IMR-90 (cell line): ENCODE measurements at regions of chr7 and their contacts with region 1.

Region 1: GRCh38 chr7:39709768-39710311 is 86.5 kb downstream of the RALA start:
- DNase-seq: peak; percentile 91
- ATAC-seq: peak; percentile 93
- H3K4me3 ChIP-seq: no peak overlapping the region
- H3K27ac ChIP-seq: no peak overlapping the region
- H3K4me1 ChIP-seq: peaks cover 4% of the 10 kb centered on the region; the same call in 1 of the 2 replicates
- H3K27me3 ChIP-seq: no peaks in the 10 kb centered on the region
- CTCF ChIP-seq: no peak
- POLR2A ChIP-seq: no peak
- RAD21 ChIP-seq: no peak

Region 2: GRCh38 chr7:39720574-39720973 is 10.7 kb after region 1 on chr7:
- CTCF ChIA-PET with region 1: no interaction called
- POLR2A ChIA-PET with region 1: no interaction called
- dilution Hi-C with region 1: no loop called
- in situ Hi-C with region 1: no loop called
- intact Hi-C with region 1: loop called (anchors 2 kb)
- DNase-seq: no peak
- ATAC-seq: no peak
- H3K4me3 ChIP-seq: no peak overlapping the region
- H3K27ac ChIP-seq: no peak overlapping the region
- H3K4me1 ChIP-seq: no peaks in the 10 kb centered on the region
- H3K27me3 ChIP-seq: no peaks in the 10 kb centered on the region
- CTCF ChIP-seq: no peak
- POLR2A ChIP-seq: no peak
- RAD21 ChIP-seq: no peak